Calu3 (cell line): ENCODE measurements at regions of chr1 and their contacts with region 1.

Region 1: DNA sequence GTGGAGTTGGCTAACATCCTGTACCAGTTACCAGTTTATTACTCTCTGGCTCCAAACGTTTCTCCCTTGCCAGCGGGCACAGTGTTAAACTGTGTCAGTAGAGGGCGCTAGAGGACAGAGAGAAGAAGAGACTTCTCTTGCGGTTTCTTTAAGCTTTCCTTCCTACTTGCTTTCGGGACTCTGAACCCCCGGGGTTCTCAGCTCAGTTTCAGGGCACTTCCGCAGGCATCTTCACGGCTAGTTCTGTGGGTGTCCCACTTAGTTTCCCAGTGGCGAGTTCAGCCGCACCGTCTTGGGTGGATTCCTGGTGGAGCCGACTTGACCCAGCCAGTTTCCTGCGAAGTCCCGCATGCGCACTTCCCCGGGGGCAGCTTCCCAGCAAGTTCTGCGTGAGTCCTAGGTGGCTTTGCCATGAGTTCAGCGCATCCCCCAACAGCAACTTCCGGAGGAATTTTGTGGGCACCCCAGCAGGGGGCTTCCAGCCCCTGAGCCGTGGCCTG is 37.9 kb upstream of the BTG2 start:
- DNase-seq: peak; percentile 84
- H3K4me3 Mint-ChIP-seq: peak overlapping the region; percentile 68
- H3K27ac Mint-ChIP-seq: no peak overlapping the region
- H3K4me1 Mint-ChIP-seq: peaks cover 12% of the 10 kb centered on the region
- H3K27me3 Mint-ChIP-seq: peaks cover 28% of the 10 kb centered on the region
- CTCF ChIP-seq: peak; percentile 85

Region 2: GRCh38 chr1:203038891-203039608 is 228.3 kb before region 1 on chr1:
- CTCF ChIA-PET with region 1: interaction called, 44 read pairs
- intact Hi-C with region 1: loop called (anchors 1 kb)
- DNase-seq: peak; percentile 83
- H3K4me3 Mint-ChIP-seq: no peak overlapping the region
- H3K27ac Mint-ChIP-seq: no peak overlapping the region
- H3K4me1 Mint-ChIP-seq: no peaks in the 10 kb centered on the region
- H3K27me3 Mint-ChIP-seq: peaks cover 100% of the 10 kb centered on the region
- CTCF ChIP-seq: peak; percentile 91

Region 3: DNA sequence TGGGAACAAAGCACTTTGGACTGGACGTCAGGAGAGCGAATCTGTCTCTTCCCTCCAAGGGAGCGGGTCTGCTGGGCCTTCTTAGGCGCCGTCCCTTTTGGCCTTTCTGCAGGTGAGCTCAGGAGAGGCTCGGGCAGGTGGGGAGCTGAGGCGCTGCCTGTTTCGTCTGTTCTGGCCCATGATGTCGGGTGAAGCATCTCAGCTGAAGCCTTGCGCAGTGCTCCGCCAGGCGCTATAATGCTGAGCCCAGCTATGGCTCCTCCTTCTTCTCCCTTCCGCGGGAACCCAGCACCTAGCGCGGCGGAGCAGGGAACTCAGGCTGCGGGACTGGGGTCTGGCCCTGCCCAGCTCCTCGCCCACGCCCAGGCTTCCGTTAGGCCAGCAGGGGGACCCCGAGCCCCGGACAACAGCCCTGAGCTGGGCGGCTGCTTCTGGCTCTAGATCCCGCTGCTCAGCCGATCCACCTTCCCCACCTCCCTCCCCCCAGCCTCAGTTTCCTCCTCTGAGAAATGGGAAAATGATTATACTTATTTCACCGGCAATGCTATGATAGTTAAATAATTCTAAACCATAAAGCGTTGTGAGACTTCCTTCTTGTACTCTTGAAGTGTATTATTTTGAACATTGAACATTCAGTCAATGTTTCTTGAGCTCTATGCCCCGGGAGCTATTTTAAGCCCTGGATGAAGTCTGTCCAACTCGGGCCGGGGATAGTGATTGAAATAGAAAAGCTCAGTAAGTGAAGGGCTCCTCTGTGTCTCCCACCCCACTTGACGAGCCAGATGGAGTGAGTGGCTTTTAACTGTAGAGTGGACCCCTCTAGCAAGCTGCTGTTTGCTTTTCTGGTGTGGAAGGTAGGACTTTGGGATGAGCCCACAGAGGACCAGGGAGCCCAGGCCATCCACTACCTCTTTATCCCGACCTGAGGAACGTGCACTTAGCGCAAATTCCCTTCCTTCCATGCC is 149.5 kb before region 1 on chr1:
- CTCF ChIA-PET with region 1: interaction called, 14 read pairs
- intact Hi-C with region 1: loop called (anchors 5 kb)
- DNase-seq: peak; percentile 92
- H3K4me3 Mint-ChIP-seq: no peak overlapping the region
- H3K27ac Mint-ChIP-seq: no peak overlapping the region
- H3K4me1 Mint-ChIP-seq: no peaks in the 10 kb centered on the region
- H3K27me3 Mint-ChIP-seq: no peaks in the 10 kb centered on the region
- CTCF ChIP-seq: peak; percentile 91

Region 4: GRCh38 chr1:203216274-203217138 is 50.9 kb before region 1 on chr1:
- CTCF ChIA-PET with region 1: interaction called, 19 read pairs
- intact Hi-C with region 1: no loop called
- DNase-seq: peak; percentile 73
- H3K4me3 Mint-ChIP-seq: no peak overlapping the region
- H3K27ac Mint-ChIP-seq: no peak overlapping the region
- H3K4me1 Mint-ChIP-seq: no peaks in the 10 kb centered on the region
- H3K27me3 Mint-ChIP-seq: peaks cover 100% of the 10 kb centered on the region
- CTCF ChIP-seq: peak; percentile 67

Region 5: GRCh38 chr1:203239526-203240305 is 27.7 kb before region 1 on chr1:
- CTCF ChIA-PET with region 1: no interaction called
- intact Hi-C with region 1: no loop called
- DNase-seq: no peak
- H3K4me3 Mint-ChIP-seq: no peak overlapping the region
- H3K27ac Mint-ChIP-seq: no peak overlapping the region
- H3K4me1 Mint-ChIP-seq: no peaks in the 10 kb centered on the region
- H3K27me3 Mint-ChIP-seq: peaks cover 79% of the 10 kb centered on the region
- CTCF ChIP-seq: no peak

Region 6: DNA sequence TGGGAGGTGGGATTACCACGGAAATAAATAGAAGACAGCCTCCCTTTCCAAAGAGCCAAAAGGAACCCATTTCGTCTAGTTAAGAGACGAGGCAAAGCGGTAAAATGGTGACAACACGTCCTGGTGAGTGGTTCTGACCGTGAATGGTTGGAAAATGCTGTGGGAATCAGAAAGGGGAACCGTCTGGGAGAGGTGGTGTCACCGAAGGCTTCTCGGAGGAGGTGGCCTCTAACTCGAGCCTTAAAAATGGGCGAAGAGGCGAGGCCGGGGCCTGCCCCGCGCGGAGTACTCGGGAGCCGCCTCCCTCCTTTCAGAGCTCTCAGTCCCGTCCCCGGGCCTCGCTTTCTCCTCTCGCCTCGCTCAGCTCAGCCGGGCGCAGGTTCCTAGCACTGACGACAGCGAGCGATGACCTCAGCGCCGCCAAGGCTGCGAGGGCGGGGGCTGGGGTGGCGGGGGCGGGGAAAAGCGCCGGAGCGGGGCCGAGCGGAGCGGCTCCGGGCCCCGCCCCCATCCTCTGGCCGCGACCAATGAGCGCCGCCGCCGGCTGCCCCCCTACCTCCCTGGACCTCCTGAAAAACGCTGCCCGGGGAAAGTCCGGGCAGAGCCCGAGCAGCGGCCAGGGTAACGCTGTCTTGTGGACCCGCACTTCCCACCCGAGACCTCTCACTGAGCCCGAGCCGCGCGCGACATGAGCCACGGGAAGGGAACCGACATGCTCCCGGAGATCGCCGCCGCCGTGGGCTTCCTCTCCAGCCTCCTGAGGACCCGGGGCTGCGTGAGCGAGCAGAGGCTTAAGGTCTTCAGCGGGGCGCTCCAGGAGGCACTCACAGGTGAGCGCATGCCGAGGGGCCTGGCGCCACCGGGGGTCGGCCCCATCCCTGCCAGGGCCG is 37.8 kb after region 1 on chr1 and contains the start of gene BTG2:
- CTCF ChIA-PET with region 1: interaction called, 10 read pairs
- intact Hi-C with region 1: no loop called
- DNase-seq: peak; percentile 87
- H3K4me3 Mint-ChIP-seq: peak within 1 kb of the TSS; percentile 68
- H3K27ac Mint-ChIP-seq: peak within 1 kb of the TSS; percentile 66
- H3K4me1 Mint-ChIP-seq: peaks cover 31% of the 10 kb centered on the region
- H3K27me3 Mint-ChIP-seq: peaks cover 59% of the 10 kb centered on the region
- CTCF ChIP-seq: no peak
- total RNA-seq, gene BTG2: 2.7 and 4.9 TPM in 2 replicates

Region 7: DNA sequence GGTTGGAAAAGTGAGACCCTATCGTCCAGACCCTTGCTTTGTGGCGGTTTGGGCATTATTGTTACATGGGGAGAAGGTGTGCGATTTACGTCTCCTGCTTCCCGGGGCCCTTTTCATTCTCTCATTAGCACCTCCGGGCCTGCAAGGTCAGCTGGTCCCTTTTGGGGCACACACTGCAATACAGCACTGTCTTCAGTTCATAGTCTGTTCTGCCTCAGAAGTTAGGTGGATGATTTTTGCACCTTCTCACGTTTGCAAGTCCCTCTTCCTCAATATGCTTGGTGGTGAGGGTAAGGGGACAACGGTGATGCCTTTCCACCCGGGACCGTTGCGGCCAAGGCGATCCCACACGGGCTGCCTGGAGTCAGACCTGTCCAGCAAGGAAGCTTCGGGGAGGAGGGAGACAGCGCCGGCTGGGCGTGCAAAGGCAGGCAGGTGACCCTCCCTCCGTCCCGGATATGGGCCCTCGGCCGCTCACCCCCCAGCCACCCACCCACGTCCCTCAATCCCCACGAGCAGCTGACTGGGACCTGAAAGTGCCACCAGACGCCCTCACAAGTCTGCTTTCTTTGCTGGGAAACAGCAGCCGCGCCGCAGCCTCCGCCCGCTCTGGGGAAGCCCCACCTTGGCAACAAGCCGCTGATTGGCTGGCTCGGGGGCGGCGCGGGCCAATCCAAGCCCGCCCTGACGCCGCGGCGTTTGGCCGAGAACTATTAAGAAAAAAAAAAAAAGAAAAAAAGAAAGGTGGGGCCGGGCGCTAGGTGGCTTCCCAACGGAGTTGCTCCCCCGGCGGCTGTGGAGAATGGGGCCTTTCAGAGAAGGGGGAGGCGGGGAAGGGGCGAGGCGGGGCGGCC is 59.7 kb after region 1 on chr1:
- CTCF ChIA-PET with region 1: interaction called, 36 read pairs
- intact Hi-C with region 1: loop called (anchors 2 kb)
- DNase-seq: peak; percentile 96
- H3K4me3 Mint-ChIP-seq: peak overlapping the region; percentile 71
- H3K27ac Mint-ChIP-seq: peak overlapping the region; percentile 70
- H3K4me1 Mint-ChIP-seq: peaks cover 21% of the 10 kb centered on the region
- H3K27me3 Mint-ChIP-seq: peaks cover 54% of the 10 kb centered on the region
- CTCF ChIP-seq: no peak

Region 8: GRCh38 chr1:203702130-203702577 is 434.8 kb after region 1 on chr1:
- CTCF ChIA-PET with region 1: no interaction called
- intact Hi-C with region 1: loop called (anchors 10 kb)
- DNase-seq: peak; percentile 55
- H3K4me3 Mint-ChIP-seq: no peak overlapping the region
- H3K27ac Mint-ChIP-seq: no peak overlapping the region
- H3K4me1 Mint-ChIP-seq: no peaks in the 10 kb centered on the region
- H3K27me3 Mint-ChIP-seq: peaks cover 15% of the 10 kb centered on the region
- CTCF ChIP-seq: peak; percentile 97